Gastrocnemius medialis (tissue), 4 donors: ENCODE measurements at regions of chr7 and their contacts with region 1.

Region 1: GRCh38 chr7:74417419-74417971 is 36.2 kb upstream of the GTF2IRD1 start:
- DNase-seq: peak; percentile 46 to 69
- ATAC-seq: peak; percentile 87 to 93
- H3K4me3 ChIP-seq: no peak overlapping the region
- H3K27ac ChIP-seq: peak overlapping the region in 1 of 4 donors; percentile 48
- H3K4me1 ChIP-seq: peaks cover 4 to 9% of the 10 kb centered on the region in 2 donors
- H3K27me3 ChIP-seq: no peaks in the 10 kb centered on the region
- CTCF ChIP-seq: peak; percentile 97 to 98 (median 97)
- POLR2A ChIP-seq: no peak

Region 2: DNA sequence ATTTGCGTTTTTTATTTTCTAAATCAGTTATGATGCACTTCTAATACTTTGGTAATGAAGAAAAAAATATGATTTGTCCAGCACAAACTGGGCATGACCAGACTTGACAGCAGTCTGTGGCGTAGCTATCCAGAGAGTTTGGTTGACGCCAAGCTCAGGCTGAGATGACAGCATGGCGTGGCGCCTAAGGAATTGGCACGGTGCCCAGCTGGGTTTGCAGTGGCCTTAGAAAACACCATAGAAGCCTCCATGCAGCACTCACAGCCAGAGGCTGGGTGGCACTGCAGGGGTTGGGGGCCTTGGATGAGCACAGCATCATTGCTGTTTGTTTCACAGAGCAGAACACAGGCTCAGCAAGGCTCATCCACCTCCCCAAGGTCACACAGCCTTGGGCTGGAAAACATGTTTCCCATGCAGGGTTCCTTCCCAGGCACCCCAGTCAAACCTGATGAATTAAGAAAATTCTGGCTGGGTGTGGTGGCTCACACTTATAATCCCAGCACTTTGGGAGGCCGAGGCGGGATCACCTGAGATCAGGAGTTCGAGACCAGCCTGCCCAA is 125.1 kb after region 1 on chr7:
- in situ Hi-C with region 1: no loop called
- intact Hi-C with region 1: no loop called
- DNase-seq: peak; percentile 23 to 63
- ATAC-seq: peak; percentile 41 to 66
- H3K4me3 ChIP-seq: no peak overlapping the region
- H3K27ac ChIP-seq: peak overlapping the region; percentile 26 to 70 (median 53)
- H3K4me1 ChIP-seq: peaks cover 4 to 7% of the 10 kb centered on the region in 2 donors
- H3K27me3 ChIP-seq: no peaks in the 10 kb centered on the region
- CTCF ChIP-seq: no peak
- POLR2A ChIP-seq: no peak

Region 3: DNA sequence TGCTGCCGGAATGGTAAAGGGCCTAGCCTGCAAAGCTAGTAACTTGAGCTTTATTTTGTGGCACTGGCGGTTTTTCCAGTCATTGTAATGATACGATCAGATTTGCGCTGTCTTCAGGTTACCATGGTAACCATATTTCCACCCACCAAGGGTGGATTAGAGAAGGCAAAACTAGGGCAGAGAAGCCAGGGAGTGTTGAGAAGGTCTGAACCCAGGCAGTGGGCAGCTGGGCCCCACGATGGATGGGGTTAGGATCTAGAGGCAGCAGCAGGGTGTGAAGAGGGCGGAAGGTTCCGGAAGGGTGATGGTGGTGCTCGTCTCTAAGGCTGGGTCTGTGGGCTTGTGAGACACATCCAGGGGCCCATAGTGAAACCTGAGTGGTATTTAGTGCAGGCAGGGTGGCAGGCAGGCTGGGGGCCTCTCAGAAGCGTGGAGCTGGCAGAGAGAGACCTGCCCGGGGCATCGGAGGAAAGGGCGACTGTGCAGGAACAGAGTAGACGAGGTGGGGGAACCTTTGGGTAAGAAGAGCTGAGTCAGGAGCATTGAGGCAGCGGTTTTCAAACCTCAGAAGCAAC is 152.1 kb after region 1 on chr7:
- in situ Hi-C with region 1: loop called in 2 of 4 experiments (anchors 10 kb)
- intact Hi-C with region 1: loop called (anchors 5 kb)
- DNase-seq: no peak
- ATAC-seq: no peak
- H3K4me3 ChIP-seq: no peak overlapping the region
- H3K27ac ChIP-seq: peak overlapping the region in 3 of 4 donors; percentile 27 to 54 (median 45)
- H3K4me1 ChIP-seq: no peaks in the 10 kb centered on the region
- H3K27me3 ChIP-seq: no peaks in the 10 kb centered on the region
- CTCF ChIP-seq: no peak
- POLR2A ChIP-seq: no peak

Region 4: DNA sequence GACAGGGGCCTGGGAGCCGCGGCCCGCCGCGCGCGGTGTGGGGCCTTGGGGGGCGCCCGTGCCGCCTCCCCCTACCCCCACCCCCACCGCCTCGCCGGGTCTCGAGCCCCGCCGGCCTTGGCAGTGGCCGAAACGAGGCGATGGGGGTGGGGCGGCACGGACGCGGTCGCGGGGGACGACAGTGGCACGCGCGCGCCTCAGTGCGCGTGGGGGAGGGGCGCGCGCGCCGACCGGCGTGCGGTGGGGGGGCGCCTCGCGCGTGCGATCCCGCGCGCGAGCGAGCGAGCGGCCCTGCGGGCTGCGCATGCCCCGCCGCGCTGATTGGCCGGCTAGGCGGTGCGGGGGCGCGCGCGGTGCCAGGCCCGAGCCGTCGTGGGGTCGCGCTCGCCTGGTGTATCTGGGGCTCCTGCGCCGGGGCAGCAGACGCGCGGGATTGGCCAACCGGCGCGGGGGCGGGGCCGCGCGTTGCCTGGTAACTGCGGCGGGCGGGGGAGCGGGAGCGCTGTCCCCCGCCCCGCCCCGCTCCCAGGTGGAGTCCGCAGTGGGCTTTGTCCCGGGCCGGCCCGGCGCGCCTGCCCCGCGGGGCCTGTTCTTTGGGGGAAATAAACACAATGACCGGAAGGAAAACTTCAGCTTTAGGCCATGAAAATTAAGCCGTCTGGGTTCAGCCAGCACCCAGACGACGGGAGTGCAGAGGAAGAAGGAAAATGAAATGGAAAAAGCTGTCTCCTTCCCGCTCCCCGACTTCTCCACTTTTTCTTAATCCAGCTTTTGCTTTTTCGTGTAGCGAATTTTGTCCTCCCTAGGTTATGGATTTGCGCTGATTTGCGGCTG is 240.9 kb after region 1 on chr7:
- in situ Hi-C with region 1: no loop called
- intact Hi-C with region 1: no loop called
- DNase-seq: peak; percentile 84 to 93
- ATAC-seq: peak; percentile 37 to 51
- H3K4me3 ChIP-seq: peak overlapping the region; percentile 66 to 100 (median 86)
- H3K27ac ChIP-seq: peak overlapping the region; percentile 97 to 100 (median 99)
- H3K4me1 ChIP-seq: peaks cover 50 to 56% of the 10 kb centered on the region in 2 donors
- H3K27me3 ChIP-seq: no peaks in the 10 kb centered on the region
- CTCF ChIP-seq: peak in 1 of 5 experiments; percentile 15
- POLR2A ChIP-seq: peak; percentile 55 to 78